ENCODE measurements at regions of chr12 and their contacts with region 1.

Region 1: DNA sequence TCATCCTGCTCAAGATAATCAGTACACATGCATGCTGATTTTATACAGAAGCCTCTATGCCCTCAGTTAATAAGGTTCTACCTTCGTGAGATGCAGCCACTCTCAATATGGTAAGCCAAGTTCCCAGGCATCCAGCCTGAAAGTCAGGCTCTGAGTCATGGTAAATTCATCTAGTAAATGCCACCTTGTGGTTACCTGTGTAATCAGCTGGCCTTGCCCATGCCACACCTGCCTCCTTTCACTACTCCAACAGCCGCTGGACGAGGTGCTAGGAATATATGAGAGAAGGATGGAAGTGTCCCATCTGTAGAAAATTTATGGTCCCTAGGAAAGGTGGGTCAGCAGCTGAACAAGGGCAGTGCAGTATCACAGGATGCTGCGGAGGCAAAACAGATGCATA is 207.3 kb downstream of the SSPN start:
- DNase-seq: peak; percentile 71
- H3K4me3 Mint-ChIP-seq: no peak overlapping the region
- H3K27ac Mint-ChIP-seq: no peak overlapping the region
- H3K4me1 Mint-ChIP-seq: no peaks in the 10 kb centered on the region
- H3K27me3 Mint-ChIP-seq: no peaks in the 10 kb centered on the region
- CTCF ChIP-seq: peak; percentile 48

Region 2: GRCh38 chr12:26239122-26239851 is 163.4 kb before region 1 on chr12:
- CTCF ChIA-PET with region 1: no interaction called
- intact Hi-C with region 1: loop called (anchors 2 kb)
- DNase-seq: peak; percentile 92
- H3K4me3 Mint-ChIP-seq: peak overlapping the region; percentile 24
- H3K27ac Mint-ChIP-seq: peak overlapping the region; percentile 92
- H3K4me1 Mint-ChIP-seq: peaks cover 59% of the 10 kb centered on the region
- H3K27me3 Mint-ChIP-seq: no peaks in the 10 kb centered on the region
- CTCF ChIP-seq: no peak

Region 3: DNA sequence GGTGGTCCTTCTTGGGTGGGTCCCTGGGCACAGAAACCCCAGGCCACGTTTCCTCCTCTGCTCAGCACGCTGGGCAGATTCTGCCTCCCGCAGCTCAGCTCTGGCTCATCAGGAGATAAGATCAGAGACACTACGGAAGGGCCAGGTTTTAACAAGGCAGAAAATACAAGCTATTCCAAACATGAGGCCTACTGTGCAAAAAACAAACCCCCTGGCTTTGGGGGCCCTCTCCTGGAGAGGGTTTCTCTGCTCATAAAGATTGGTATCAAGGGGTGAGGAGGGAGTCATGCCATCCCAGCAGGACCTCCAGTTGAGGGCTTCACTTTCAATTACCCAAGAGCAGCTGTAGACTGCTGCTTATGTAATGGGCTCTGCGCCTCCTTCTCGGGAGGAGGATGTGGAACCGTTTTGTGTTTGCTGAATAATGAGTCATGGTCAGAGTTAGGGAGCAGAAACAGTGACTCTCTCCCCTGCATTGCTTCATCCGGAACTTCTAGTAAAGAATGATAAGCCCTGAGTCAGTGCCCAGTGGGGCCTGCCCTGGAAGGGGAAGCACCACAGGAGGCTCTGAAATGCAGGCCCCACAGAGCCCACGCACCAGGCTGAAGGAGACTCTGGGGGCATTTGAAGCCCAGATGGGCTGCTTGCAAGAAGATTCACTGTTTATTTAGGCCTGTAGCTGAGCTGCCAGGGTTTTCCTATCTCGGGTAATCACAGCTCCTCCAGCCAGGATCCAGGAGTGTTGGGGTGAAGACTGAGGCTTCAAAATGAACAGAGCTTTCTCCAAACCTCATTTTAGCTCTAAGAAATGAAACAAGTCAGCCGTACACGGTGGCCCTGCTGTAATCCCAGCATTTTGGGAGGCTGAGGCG is 128.0 kb before region 1 on chr12:
- CTCF ChIA-PET with region 1: no interaction called
- intact Hi-C with region 1: loop called (anchors 5 kb)
- DNase-seq: peak; percentile 84
- H3K4me3 Mint-ChIP-seq: peak overlapping the region; percentile 28
- H3K27ac Mint-ChIP-seq: peak overlapping the region; percentile 96
- H3K4me1 Mint-ChIP-seq: peaks cover 51% of the 10 kb centered on the region
- H3K27me3 Mint-ChIP-seq: no peaks in the 10 kb centered on the region
- CTCF ChIP-seq: no peak

Region 4: GRCh38 chr12:26443309-26443708 is 40.7 kb after region 1 on chr12:
- CTCF ChIA-PET with region 1: no interaction called
- intact Hi-C with region 1: no loop called
- DNase-seq: no peak
- H3K4me3 Mint-ChIP-seq: no peak overlapping the region
- H3K27ac Mint-ChIP-seq: no peak overlapping the region
- H3K4me1 Mint-ChIP-seq: no peaks in the 10 kb centered on the region
- H3K27me3 Mint-ChIP-seq: no peaks in the 10 kb centered on the region
- CTCF ChIP-seq: no peak